ENCODE measurements at regions of chr16 and their contacts with region 1.

Region 1: GRCh38 chr16:11152677-11153331 is 103.2 kb downstream of the SOCS1 start:
- DNase-seq: peak; percentile 34 to 77 (median 73)
- H3K4me3 ChIP-seq: no peak overlapping the region
- H3K27ac ChIP-seq: no peak overlapping the region
- H3K4me1 ChIP-seq: peaks cover 0 to 33% (median 13%) of the 10 kb centered on the region in 4 experiments
- H3K27me3 ChIP-seq: no peaks in the 10 kb centered on the region

Region 2: GRCh38 chr16:11140098-11140375 is 12.8 kb before region 1 on chr16:
- CTCF ChIA-PET with region 1: interaction called, 11 read pairs
- POLR2A ChIA-PET with region 1: no interaction called
- DNase-seq: no peak
- H3K4me3 ChIP-seq: no peak overlapping the region
- H3K27ac ChIP-seq: no peak overlapping the region
- H3K4me1 ChIP-seq: peaks cover 0 to 29% (median 8%) of the 10 kb centered on the region in 4 experiments
- H3K27me3 ChIP-seq: no peaks in the 10 kb centered on the region